Calu3 (cell line): ENCODE measurements at regions of chr3 and their contacts with region 1.

Region 1: DNA sequence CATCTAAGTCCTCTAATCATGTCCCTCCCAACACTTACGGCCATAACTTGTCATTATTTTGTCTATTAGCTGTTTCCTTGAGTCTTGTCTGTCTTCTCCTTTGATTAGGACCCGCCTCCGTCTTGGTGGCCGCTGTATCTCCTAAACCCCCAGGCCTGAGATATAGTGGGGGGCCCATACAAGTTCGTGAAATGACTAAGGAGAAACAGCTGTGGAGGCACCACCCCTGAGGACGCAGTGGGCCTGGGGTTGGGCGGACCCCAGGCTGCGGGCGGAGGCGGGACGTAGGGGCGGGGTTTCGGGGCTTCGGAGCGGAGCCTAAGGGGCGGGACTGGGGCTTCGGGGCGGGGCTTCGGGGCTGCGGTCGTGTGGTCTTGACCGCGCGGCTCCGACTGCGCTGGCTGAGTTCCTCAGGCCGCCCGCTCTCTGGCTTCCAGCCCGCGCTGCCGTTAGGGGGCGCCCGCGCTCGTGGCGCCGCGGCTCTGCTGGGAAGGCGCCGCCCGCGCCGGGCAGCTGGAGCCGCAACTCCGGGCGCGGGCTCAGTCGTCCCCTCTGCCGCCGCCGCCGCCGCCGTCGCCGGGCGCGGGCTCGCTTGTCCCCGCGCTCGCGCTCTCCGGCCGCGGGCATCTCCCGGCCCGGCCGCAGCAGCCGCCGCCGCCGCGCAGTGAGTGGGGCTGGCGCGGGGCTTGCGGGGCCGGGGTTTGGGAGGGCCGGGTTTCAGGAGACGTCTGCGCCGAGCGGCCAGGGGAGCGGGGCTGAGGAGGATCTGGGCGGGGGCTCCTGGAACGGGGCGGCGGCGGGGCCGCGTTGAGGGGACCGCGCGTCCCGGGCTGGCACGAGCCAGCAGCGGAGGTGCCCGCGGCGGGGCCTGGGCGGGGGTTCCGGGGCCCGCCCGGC is at the start of gene KCTD6:
- DNase-seq: peak; percentile 96
- H3K4me3 Mint-ChIP-seq: peak within 1 kb of the TSS; percentile 81
- H3K27ac Mint-ChIP-seq: peak within 1 kb of the TSS; percentile 63
- H3K4me1 Mint-ChIP-seq: peaks cover 51% of the 10 kb centered on the region
- H3K27me3 Mint-ChIP-seq: no peaks in the 10 kb centered on the region
- CTCF ChIP-seq: peak; percentile 71
- total RNA-seq, gene KCTD6: 10.7 and 11.4 TPM in 2 replicates

Region 2: GRCh38 chr3:58463181-58463941 is 28.4 kb before region 1 on chr3:
- CTCF ChIA-PET with region 1: no interaction called
- intact Hi-C with region 1: loop called (anchors 2 kb)
- DNase-seq: peak; percentile 84
- H3K4me3 Mint-ChIP-seq: peak overlapping the region; percentile 39
- H3K27ac Mint-ChIP-seq: no peak overlapping the region
- H3K4me1 Mint-ChIP-seq: peaks cover 15% of the 10 kb centered on the region
- H3K27me3 Mint-ChIP-seq: no peaks in the 10 kb centered on the region
- CTCF ChIP-seq: peak; percentile 53

Region 3: DNA sequence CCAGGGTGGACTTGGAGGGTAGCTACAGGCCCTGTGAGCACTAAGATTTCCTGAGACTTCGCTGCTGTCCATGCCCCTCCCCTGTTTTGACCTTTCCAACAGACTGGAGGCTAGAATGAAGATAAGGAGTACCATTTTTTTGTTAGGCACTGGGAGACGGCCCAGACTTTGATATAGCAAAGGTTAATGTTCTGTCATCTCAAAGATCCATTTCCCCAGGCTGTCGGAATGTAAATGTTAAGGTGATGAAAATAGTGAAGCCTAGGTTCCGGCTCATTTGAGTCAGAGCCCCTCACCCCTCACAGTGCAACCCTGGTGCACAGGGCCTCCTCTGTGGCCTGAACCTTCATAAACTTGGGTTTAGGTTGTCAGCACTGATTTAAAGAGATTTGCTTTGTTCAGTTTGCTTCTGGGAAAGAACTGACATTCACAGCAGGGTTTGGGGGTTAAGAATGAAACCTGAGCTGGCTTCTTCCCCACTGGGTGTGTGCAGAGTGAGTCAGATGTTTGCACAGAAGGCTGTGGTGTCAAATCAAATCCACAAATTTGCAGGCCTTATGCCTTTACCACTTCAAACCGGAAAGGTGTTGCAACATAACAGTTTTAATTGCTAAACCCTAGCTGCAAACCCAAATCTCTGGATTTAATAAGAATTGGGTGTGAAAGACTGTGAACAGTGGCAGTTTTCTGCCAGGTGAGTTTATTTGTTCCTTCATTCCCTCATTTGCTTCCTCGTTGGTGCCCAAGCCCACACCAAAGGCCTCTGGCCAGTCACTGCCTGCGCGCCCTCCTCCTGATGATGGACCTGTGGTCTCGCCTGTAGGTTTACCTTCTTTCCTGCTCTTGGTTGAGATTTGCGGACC is 20.5 kb before region 1 on chr3:
- CTCF ChIA-PET with region 1: interaction called, 7 read pairs
- intact Hi-C with region 1: loop called (anchors 2 kb)
- DNase-seq: peak; percentile 78
- H3K4me3 Mint-ChIP-seq: peak overlapping the region; percentile 14
- H3K27ac Mint-ChIP-seq: peak overlapping the region; percentile 50
- H3K4me1 Mint-ChIP-seq: peaks cover 47% of the 10 kb centered on the region
- H3K27me3 Mint-ChIP-seq: no peaks in the 10 kb centered on the region
- CTCF ChIP-seq: no peak

Region 4: GRCh38 chr3:58480309-58480708 is 11.4 kb before region 1 on chr3:
- CTCF ChIA-PET with region 1: no interaction called
- intact Hi-C with region 1: loop called (anchors 1 kb)
- DNase-seq: no peak
- H3K4me3 Mint-ChIP-seq: no peak overlapping the region
- H3K27ac Mint-ChIP-seq: no peak overlapping the region
- H3K4me1 Mint-ChIP-seq: peaks cover 3% of the 10 kb centered on the region
- H3K27me3 Mint-ChIP-seq: no peaks in the 10 kb centered on the region
- CTCF ChIP-seq: no peak

Region 5: DNA sequence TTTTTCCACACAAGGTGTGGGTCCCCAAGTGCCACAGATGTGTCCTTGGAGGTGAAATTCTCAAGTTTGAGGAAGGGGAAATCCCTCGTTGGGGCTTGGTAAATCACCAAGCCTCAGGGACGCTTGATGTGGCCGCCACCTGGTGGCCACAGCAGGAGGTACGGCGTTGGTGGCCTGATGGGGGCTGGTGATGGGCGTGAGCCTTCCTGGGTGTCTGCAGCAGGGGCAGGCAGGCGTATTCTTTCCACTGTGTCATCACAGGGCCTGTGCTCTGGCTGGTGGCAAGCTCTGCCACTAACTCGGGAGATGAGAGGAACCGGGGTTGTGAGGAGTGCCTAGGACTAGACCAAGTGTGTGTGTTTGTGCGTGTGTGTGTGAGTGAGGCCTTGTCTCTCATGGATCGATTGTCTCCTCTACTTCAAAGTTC is 41.1 kb after region 1 on chr3:
- CTCF ChIA-PET with region 1: interaction called, 5 read pairs
- intact Hi-C with region 1: loop called (anchors 2 kb)
- DNase-seq: peak; percentile 82
- H3K4me3 Mint-ChIP-seq: no peak overlapping the region
- H3K27ac Mint-ChIP-seq: no peak overlapping the region
- H3K4me1 Mint-ChIP-seq: peaks cover 34% of the 10 kb centered on the region
- H3K27me3 Mint-ChIP-seq: no peaks in the 10 kb centered on the region
- CTCF ChIP-seq: peak; percentile 72